Vagina (tissue), 2 donors: ENCODE measurements at regions of chr2 and their contacts with region 1.

Region 1: DNA sequence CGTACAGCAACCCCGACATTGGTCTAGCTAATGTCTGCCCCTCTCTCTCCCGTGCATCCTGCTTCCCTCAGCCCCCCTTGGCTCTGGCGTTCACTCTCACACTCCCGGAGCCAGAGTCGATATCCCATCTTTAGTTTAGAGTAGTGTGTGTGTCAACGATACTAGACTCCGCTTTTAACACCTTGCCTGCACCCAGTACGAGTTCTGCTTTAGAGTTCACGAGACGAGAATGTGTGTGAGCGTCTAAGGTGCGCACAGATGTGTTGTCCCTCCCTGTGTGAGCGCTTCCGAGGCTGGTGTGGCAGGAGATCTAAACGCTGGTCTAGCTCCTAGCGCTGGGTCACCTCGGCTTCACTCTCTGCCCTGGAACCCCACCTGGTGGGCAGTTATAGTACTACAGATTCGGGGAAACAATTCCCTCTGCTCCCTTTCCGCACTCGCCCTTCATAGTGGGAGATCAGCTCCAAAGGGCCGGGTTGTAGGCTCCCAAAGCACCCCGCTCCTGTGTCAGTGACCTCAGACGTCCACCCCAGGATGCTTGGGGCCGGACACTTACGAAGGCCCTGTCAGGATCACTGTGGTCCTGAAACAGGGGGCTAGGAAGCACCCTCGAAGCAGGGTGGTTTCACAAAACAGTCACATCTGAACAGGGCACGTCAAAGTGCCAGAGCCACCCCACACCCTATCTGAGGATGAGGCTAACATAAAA is 2.6 kb upstream of the CYP26B1 start:
- DNase-seq: peak; percentile 88 to 94
- H3K4me3 ChIP-seq: peak overlapping the region; percentile 42 to 43
- H3K27ac ChIP-seq: no peak overlapping the region
- H3K4me1 ChIP-seq: peaks cover 44% of the 10 kb centered on the region
- H3K27me3 ChIP-seq: peaks cover 9% of the 10 kb centered on the region
- CTCF ChIP-seq: peak; percentile 59 to 89 (median 89)
- POLR2A ChIP-seq: no peak

Region 2: DNA sequence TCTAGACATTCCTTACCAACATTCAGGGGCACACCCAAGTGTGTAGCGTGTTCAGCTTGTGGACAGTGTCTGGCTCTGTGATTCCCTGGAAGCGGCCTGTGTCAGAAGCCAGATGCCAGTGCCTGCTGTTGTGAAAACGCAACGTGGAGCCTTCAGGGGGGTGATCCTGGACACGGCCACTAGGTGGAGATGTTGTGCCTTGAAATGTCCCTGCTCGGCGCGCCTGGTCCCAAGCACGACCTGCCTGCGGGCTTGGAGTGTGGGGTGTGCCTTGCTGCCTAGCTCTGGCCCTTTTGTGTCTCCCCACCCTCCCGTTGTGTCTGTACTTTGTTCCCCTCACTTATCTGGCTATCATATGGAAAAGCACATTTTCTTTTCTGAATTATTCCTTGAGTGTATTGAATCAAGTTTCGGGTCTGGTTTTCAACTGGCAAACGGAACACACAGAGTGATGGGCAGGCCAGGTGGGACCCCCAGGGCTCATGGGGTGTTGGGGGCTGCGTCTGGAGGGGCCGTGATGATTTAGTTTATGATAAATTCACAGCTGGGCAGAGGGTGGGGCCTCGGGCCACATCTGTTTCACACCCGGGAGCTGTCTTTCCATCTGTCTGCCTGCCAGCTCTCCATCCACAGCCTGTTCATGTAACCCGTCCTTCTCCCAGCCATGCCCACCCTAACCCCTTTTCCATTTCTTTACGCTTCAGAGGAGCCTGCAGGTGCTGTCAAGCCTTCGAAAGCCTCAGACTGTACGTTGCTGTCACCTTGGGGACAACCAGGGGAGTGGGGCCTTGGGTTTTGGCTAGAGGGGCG is 601.5 kb before region 1 on chr2:
- intact Hi-C with region 1: loop called (anchors 2 kb)
- DNase-seq: no peak
- H3K4me3 ChIP-seq: no peak overlapping the region
- H3K27ac ChIP-seq: no peak overlapping the region
- H3K4me1 ChIP-seq: peaks cover 12% of the 10 kb centered on the region
- H3K27me3 ChIP-seq: no peaks in the 10 kb centered on the region
- CTCF ChIP-seq: peak; percentile 78 to 89 (median 83)
- POLR2A ChIP-seq: no peak

Region 3: DNA sequence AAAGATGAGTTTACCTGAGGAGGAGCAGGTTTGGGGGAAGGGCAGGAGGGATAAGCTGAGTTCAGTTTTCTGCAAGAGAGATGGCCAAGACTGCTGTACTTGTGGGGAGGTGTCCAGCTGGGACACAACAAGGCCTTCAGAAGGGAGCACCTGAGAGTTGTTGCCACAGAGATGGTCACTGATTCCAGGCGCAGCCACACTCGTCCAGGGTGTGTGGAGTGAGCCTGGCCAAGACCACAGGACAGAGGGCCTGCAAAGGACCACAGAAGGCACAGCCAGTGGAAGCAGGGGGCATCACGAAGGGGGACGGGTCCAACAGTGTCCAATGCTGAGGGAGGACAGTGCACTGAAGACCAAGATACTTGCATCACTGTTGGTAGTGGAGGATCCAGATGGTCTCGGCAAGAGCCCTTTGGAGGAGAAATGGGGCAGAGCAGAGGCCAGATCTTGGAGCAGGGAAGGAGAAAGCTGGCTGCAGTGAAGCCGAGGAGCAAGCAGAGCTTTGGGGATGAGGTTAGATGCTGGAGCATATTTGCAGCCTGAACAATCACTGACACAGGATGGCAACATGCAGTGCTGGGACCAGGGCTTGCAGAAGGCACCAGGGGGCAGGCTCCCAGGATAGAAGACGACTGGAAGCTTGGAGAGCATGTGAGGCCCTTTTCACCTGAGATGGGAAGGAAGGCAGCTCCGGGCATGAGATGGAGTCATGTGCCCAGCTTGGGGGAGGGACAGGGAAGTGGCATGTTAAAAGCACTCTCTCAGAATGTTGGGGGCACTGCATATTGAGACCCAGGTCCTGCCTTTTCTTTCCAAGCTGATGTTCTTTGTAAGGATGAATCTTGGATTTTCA is 216.6 kb before region 1 on chr2:
- intact Hi-C with region 1: loop called (anchors 10 kb)
- DNase-seq: no peak
- H3K4me3 ChIP-seq: no peak overlapping the region
- H3K27ac ChIP-seq: no peak overlapping the region
- H3K4me1 ChIP-seq: peaks cover 30% of the 10 kb centered on the region
- H3K27me3 ChIP-seq: no peaks in the 10 kb centered on the region
- CTCF ChIP-seq: no peak
- POLR2A ChIP-seq: no peak

Region 4: DNA sequence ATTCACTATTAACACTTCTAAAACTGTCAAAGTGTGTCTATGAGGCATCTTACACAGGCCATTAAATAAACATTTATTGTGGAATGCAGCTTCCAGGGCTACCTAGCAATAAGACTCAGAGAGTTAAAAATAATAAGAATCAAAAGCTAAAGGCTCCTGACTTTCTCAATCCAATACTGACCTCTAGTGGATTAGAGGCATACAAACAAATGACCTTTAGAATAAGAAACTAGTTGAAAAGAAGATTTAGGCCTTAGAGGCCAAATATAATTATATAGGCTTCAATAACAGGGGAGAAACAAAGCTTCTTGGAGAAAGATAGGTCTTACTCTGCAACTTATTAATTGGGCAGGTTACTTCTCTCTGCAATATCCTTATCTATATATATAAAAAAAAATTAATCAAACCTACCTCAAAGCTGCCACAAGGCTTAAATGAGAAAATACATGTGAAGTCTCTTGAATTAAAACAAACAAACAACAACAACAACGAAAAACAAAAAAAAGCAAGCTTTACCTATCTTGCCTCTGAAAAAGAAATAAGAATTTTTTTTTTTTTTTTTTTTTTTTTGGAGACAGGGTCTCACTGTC is 429.4 kb after region 1 on chr2:
- intact Hi-C with region 1: loop called (anchors 10 kb)
- DNase-seq: no peak
- H3K4me3 ChIP-seq: no peak overlapping the region
- H3K27ac ChIP-seq: no peak overlapping the region
- H3K4me1 ChIP-seq: no peaks in the 10 kb centered on the region
- H3K27me3 ChIP-seq: no peaks in the 10 kb centered on the region
- CTCF ChIP-seq: peak in 2 of 3 experiments; percentile 41 to 45
- POLR2A ChIP-seq: no peak